ENCODE measurements at regions of chr12 and their contacts with region 1.

Region 1: DNA sequence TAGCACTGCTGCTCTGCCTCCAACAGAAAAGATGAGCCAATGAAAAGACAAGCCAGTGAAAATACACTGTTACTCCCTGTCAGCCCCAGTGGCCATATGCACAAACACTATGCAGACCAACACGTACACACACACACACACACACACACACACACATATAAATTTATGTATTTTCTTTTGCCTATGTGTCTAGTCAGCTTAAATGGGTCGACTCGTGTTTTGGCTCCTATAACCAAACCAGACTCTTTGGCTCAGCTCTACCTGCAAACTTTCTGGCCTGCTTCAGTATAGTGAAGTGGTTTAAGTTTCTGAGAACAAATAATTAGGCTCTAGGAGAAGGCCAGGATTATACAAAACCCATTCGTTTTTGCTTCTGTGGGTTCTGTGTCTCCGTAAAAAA is 30.3 kb upstream of the PMCH start:
- DNase-seq: no peak
- H3K4me3 ChIP-seq: no peak overlapping the region
- CTCF ChIP-seq: no peak

Region 2: DNA sequence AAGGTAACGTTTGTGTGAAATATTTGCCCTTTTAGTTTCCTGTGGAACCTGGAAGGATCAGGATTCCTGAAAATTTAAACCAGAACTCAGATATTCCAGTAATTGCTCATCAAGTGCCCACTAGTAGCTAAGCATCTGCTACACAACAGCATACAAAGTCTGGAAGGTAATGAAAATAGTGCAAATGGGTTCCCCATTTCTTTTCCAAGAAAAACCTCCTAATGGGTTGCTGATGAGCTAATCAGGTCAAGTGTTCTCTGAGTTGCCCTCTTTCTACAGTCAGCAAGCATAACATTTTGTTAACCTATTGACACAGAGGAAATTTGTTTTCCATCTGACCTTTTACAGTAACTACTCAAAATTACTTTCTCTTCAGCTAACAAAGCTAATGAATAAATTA is 53.3 kb after region 1 on chr12:
- in situ Hi-C with region 1: loop called (anchors 5 kb)
- DNase-seq: no peak
- H3K4me3 ChIP-seq: no peak overlapping the region
- CTCF ChIP-seq: no peak

Measured in astrocyte of the cerebellum (primary cell).